Ovary (tissue), 10 donors: ENCODE measurements at regions of chr9 and their contacts with region 1.

Region 1: GRCh38 chr9:19925817-19926503 is 137.1 kb upstream of the SLC24A2 start:
- DNase-seq: peak; percentile 68 to 74 (median 72)
- H3K4me3 ChIP-seq: peak overlapping the region; percentile 32
- H3K27ac ChIP-seq: no peak overlapping the region
- H3K4me1 ChIP-seq: no peaks in the 10 kb centered on the region
- H3K27me3 ChIP-seq: no peaks in the 10 kb centered on the region
- CTCF ChIP-seq: peak; percentile 88 to 89 (median 88)
- EP300 ChIP-seq: no peak
- POLR2A ChIP-seq: no peak

Region 2: DNA sequence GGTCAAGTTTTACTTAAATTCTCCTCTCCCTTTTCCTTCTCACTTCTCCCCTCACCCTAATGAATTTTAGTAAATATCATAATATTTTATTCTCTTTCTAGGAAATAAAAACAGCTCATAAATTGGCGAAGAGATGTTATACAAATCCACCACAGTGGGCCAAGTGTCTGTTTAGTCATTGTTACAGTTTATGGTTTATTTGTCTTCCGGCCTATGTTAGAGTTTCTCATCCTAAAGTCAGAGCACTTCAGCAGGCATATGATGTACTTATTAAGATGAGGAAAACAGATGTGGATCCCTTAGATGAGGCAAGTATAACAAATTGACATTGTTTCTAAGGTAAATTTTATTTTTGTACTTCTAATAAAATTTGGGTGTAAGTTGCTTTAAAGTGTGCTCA is 594.1 kb before region 1 on chr9:
- intact Hi-C with region 1: no loop called
- DNase-seq: no peak
- H3K4me3 ChIP-seq: no peak overlapping the region
- H3K27ac ChIP-seq: no peak overlapping the region
- H3K4me1 ChIP-seq: no peaks in the 10 kb centered on the region
- H3K27me3 ChIP-seq: no peaks in the 10 kb centered on the region
- CTCF ChIP-seq: no peak
- EP300 ChIP-seq: no peak
- POLR2A ChIP-seq: no peak

Region 3: DNA sequence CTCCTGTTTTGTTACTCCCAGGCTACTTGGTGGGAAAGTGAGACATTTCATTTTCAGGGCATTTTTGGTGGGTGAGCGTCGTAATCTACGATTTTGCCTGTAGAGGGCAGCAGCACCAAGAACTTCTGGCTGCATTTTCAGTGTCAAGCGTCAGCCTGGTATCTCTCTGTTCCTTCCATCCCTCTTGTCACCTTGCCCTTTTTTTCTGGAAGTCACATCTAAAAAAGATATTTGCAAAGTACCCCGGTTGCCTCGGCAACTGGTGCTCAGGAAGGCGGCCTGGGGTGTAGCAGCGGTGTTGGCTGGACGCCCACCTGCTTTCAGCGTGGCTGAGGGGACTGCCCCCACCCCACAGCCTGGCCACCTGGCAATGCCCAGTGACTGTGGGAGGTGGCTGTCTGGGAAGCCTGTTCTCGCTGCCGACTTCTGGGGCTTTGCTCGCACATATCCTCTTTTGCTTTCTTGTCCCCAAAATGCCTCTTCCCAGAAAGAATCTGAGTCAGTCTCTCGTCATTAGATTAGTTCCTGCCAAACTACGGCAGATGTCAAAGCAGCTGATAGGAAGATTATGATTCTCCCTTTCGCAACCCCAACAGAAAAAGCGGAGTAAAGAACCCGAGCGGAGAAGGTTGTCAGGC is 432.7 kb before region 1 on chr9:
- intact Hi-C with region 1: loop called in 1 of 4 experiments (anchors 10 kb)
- DNase-seq: peak; percentile 45 to 69 (median 47)
- H3K4me3 ChIP-seq: peak overlapping the region; percentile 32
- H3K27ac ChIP-seq: no peak overlapping the region
- H3K4me1 ChIP-seq: peaks cover 3% of the 10 kb centered on the region
- H3K27me3 ChIP-seq: no peaks in the 10 kb centered on the region
- CTCF ChIP-seq: peak; percentile 16 to 62 (median 42)
- EP300 ChIP-seq: no peak
- POLR2A ChIP-seq: no peak

Region 4: GRCh38 chr9:19754921-19755320 is 171.0 kb before region 1 on chr9:
- intact Hi-C with region 1: no loop called
- DNase-seq: no peak
- H3K4me3 ChIP-seq: no peak overlapping the region
- H3K27ac ChIP-seq: no peak overlapping the region
- H3K4me1 ChIP-seq: no peaks in the 10 kb centered on the region
- H3K27me3 ChIP-seq: no peaks in the 10 kb centered on the region
- CTCF ChIP-seq: no peak
- EP300 ChIP-seq: no peak
- POLR2A ChIP-seq: no peak

Region 5: GRCh38 chr9:20117986-20118385 is 192.0 kb after region 1 on chr9:
- intact Hi-C with region 1: no loop called
- DNase-seq: no peak
- H3K4me3 ChIP-seq: no peak overlapping the region
- H3K27ac ChIP-seq: no peak overlapping the region
- H3K4me1 ChIP-seq: no peaks in the 10 kb centered on the region
- H3K27me3 ChIP-seq: no peaks in the 10 kb centered on the region
- CTCF ChIP-seq: no peak
- EP300 ChIP-seq: no peak
- POLR2A ChIP-seq: no peak

Region 6: DNA sequence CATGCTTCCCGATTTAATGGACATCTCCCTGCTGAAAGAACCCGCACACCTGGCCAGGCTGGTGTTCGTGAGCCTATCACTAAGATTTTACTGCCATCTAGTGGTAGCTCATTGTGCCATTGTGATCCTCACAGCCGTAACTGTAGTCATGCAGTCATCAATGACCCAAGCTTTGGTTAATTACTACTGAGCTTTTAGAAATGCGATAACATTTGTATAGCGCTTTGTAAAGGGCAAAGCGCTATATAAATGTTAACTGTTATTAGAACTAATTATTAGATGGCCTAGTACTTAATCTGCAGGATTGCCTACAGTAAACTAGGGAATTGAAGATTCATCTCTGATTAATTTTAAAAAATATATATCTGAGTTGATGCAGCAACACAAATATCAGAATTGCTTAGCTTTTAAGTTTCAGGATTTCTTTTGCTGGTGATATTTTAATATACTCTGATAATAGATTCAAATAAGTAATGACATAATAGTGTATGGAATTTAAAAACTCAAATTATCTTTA is 1015.3 kb after region 1 on chr9:
- intact Hi-C with region 1: loop called (anchors 5 kb)
- DNase-seq: peak; percentile 29 to 50 (median 41)
- H3K4me3 ChIP-seq: no peak overlapping the region
- H3K27ac ChIP-seq: no peak overlapping the region
- H3K4me1 ChIP-seq: no peaks in the 10 kb centered on the region
- H3K27me3 ChIP-seq: no peaks in the 10 kb centered on the region
- CTCF ChIP-seq: peak; percentile 60 to 85 (median 75)
- EP300 ChIP-seq: no peak
- POLR2A ChIP-seq: no peak

Region 7: GRCh38 chr9:21102305-21102704 is 1176.3 kb after region 1 on chr9:
- intact Hi-C with region 1: loop called in 1 of 4 experiments (anchors 10 kb)
- DNase-seq: no peak
- H3K4me3 ChIP-seq: no peak overlapping the region
- H3K27ac ChIP-seq: no peak overlapping the region
- H3K4me1 ChIP-seq: no peaks in the 10 kb centered on the region
- H3K27me3 ChIP-seq: no peaks in the 10 kb centered on the region
- CTCF ChIP-seq: no peak
- EP300 ChIP-seq: no peak
- POLR2A ChIP-seq: no peak

Region 8: GRCh38 chr9:21110708-21111576 is 1185.0 kb after region 1 on chr9:
- intact Hi-C with region 1: loop called in 3 of 4 experiments (anchors 2 to 10 kb)
- DNase-seq: no peak
- H3K4me3 ChIP-seq: no peak overlapping the region
- H3K27ac ChIP-seq: no peak overlapping the region
- H3K4me1 ChIP-seq: no peaks in the 10 kb centered on the region
- H3K27me3 ChIP-seq: no peaks in the 10 kb centered on the region
- CTCF ChIP-seq: peak; percentile 44 to 70 (median 64)
- EP300 ChIP-seq: no peak
- POLR2A ChIP-seq: no peak